ENCODE measurements at regions of chr10 and their contacts with region 1.

Region 1: DNA sequence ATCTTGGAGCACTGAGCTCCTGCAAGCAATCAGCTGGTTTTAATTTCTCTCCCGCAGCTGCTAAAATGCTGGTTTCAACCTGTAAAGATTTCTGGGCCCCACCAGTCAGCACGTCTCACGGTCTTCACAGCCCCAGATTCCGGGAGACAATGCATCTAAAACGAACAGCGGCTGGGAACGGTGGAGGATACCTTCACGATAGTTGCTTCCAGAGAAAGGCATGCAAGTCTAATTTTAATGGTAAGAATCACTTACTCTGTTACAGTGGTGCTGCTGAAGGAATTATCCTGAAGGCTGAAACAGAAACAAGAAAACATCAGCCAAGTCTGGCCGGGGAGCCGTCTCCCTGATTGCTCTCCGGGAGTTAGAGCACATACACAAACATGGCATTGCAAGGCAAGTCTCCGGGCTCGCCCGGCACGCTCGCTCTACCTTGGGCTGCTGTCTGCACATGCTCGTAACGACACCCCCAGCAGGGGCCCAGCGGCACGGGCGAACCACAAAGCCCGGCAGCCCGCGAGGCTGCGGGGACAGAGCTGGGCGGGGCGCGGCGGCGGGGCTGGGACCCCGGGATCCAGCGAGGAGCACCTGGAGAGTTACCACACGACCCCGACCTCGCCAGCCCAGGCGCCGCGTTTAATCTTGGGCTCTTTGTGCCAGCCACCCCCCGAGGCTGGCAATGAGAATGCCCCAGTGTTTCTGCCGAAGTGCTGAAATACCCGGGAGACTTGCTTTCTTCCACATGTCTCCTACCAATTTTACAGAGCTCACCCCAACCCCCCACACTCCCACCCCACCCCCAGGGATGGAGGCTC is at the start of gene FAM13C:
- DNase-seq: peak; percentile 54
- H3K4me3 ChIP-seq: peak within 1 kb of the TSS; percentile 47 to 56 (median 50)
- H3K27ac ChIP-seq: peak within 1 kb of the TSS; percentile 39
- H3K4me1 ChIP-seq: peaks cover 11% of the 10 kb centered on the region
- H3K27me3 ChIP-seq: peaks cover 3% of the 10 kb centered on the region
- CTCF ChIP-seq: no peak
- total RNA-seq, gene FAM13C: 2.1 to 4.5 TPM

Region 2: DNA sequence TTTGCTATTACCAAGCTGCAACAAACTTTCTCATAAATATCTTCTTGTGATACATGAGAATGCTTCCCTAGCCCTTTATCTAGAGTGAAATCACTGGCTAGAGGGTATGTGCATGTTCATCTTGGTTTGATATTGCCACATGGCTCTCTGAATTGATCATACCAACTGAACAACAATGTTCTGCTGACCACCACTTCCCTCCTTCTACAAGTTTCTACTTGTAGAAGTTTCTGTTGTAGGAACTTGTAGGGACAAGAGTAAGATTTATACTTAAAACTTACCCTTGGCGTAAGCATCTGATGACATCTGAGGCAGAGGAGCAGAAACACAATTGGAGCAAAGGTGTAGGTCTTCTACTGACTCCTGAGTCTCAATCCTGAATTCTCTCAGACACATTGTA is 86.3 kb after region 1 on chr10:
- CTCF ChIA-PET with region 1: no interaction called
- dilution Hi-C with region 1: no loop called
- in situ Hi-C with region 1: no loop called
- intact Hi-C with region 1: loop called (anchors 10 kb)
- DNase-seq: peak; percentile 80
- H3K4me3 ChIP-seq: no peak overlapping the region
- H3K27ac ChIP-seq: peak overlapping the region; percentile 48
- H3K4me1 ChIP-seq: peaks cover 9% of the 10 kb centered on the region
- H3K27me3 ChIP-seq: no peaks in the 10 kb centered on the region
- CTCF ChIP-seq: no peak

Measured in mammary epithelial cell (primary cell).